Mucosa of descending colon (tissue), 3 donors: ENCODE measurements at regions of chr5 and their contacts with region 1.

Region 1: DNA sequence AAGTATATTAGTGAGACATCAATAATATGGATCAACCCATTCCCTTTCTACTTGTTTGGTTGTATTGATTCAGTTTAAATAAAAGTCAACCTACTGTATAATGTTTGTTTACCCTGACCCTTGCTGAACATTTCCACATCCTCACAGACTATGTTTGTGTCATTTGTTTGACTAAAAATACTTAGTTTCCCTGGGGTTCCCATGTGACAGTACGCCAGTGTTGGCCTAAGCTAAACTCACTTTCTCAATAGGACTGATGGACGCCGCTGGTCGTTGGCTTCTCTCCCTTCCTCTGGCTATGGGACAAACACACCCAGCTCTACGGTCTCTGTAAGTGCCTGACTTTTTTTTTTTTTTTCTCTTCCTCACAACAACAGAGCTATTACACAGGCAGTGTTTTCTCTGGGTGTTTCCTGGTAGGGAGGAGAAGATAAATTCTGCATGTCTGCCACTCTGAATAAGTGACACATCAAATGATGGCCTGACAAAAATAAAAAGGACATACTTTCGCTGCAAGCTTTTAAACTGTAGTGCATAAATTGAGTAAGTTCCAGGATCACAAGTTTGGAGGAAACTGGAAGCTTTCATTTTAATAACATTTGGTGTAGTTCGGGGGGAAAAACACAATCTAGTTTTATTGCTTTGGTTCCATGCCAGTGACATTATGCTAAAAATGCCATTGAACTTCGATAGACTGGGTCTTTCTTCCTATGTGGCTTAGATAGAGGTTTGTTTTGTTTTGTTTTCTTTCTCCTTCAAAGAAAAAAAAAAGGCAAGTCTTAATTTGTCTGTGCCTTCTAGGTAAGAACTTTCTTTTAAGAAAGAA is 101.0 kb downstream of the CD180 start:
- DNase-seq: peak; percentile 65 to 78 (median 67)
- ATAC-seq: peak; percentile 98
- H3K4me3 ChIP-seq: no peak overlapping the region
- H3K4me1 ChIP-seq: peaks cover 16% of the 10 kb centered on the region
- CTCF ChIP-seq: no peak

Region 2: DNA sequence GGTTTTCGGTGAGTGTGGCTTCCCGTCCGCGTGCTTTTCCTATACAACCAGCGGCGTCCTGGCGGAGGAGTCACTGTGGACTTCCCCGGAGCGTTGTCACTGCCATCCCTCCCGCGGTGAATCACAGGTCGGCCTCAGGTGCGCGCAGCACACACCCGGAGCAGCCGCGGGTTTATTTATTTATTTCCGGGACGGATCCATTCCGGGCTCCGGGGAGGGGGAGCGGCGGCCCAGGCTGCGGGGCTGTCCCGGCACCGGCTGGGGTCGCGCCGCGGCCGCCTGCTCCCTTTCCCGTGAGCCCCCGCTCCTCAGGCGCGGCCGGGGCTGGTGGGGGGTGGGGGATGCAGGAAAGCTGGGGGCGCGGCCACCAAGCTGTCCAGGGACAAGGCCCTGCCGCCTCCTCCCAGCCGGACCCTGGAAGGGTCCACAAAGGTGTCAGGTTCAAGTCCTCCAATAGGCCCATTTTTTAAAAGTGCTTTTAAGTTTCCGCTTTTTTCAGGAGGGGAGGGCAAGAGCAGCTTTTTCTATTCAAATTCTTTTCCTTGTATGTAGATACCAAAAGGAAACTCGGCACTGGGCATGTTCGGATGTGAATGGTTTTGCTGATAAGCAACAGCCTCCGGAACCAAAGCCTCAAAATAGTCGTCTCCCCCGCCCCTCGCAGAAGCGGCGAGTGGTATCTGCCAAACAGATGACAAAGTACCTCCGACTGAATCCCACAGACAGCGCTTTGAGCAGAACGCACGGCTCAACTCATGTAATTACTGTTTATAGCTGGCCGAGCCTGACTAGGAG is 91.4 kb before region 1 on chr5:
- intact Hi-C with region 1: loop called in 1 of 2 experiments (anchors 10 kb)
- DNase-seq: peak; percentile 92 to 93 (median 93)
- ATAC-seq: peak; percentile 93
- H3K4me3 ChIP-seq: peak overlapping the region; percentile 47
- H3K4me1 ChIP-seq: peaks cover 12% of the 10 kb centered on the region
- CTCF ChIP-seq: no peak